Activated CD4-positive, alpha-beta memory T cell treated with anti-CD3 and anti-CD28 coated beads, Interleukin-2, amount 10 ng/mL, durations not matched to agents 7 days and 5 days (primary cell): ENCODE measurements at regions of chr17 and their contacts with region 1.

Region 1: DNA sequence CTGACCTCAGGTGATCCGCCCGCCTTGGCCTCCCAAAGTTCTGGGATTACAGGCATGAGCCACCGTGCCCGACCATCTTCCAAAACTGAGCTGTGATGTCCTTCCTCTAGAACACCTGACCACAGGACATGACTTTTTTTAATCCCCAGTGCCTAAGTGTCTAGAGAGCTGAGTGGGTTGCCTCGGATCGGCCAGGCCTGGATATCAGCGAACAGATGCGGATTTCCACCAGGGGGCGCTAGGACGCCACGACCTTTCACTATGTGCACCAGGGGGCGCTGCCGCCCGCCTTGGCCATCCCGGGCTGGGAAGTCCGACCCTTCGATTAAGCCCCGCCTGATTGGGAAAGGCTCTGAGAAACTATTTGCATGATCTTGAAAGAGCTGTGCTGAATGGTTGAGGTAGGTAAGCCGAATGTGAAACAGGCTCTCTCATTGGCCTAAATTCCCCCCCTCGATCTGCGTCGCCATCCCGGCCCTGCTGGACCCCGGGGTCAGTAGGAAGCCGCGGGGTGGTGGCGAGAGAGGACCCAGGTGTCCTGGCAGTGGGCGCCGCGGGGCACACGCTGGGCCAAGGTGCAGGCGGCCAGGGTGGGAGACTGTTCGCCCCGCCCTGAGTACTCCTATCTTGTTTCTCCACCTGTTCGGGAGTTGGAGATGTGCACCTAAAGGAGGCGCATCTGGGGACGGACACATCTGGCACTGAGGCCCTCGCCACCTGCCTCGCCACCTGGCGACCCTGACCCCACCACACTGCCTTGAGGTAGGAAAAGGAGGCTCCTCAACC is at the start of gene ACBD4:
- DNase-seq: peak; percentile 98
- H3K4me3 Mint-ChIP-seq: peak within 1 kb of the TSS; percentile 87
- H3K27ac Mint-ChIP-seq: peak within 1 kb of the TSS; percentile 66
- H3K4me1 Mint-ChIP-seq: peaks cover 20% of the 10 kb centered on the region
- H3K27me3 Mint-ChIP-seq: peaks cover 9% of the 10 kb centered on the region
- total RNA-seq, gene ACBD4: 15.0 to 17.8 TPM

Region 2: GRCh38 chr17:45051060-45051719 is 84.2 kb before region 1 on chr17 and contains the start of gene DCAKD:
- CTCF ChIA-PET with region 1: interaction called, 21 read pairs
- POLR2A ChIA-PET with region 1: no interaction called
- DNase-seq: peak; percentile 95
- H3K4me3 Mint-ChIP-seq: peak within 1 kb of the TSS; percentile 96
- H3K27ac Mint-ChIP-seq: peak within 1 kb of the TSS; percentile 98
- H3K4me1 Mint-ChIP-seq: peaks cover 49% of the 10 kb centered on the region
- H3K27me3 Mint-ChIP-seq: no peaks in the 10 kb centered on the region
- total RNA-seq, gene DCAKD: 25.9 to 26.2 TPM

Region 3: GRCh38 chr17:45098869-45099616 is 36.3 kb before region 1 on chr17:
- CTCF ChIA-PET with region 1: interaction called, 10 read pairs
- POLR2A ChIA-PET with region 1: no interaction called
- DNase-seq: peak; percentile 79
- H3K4me3 Mint-ChIP-seq: no peak overlapping the region
- H3K27ac Mint-ChIP-seq: no peak overlapping the region
- H3K4me1 Mint-ChIP-seq: no peaks in the 10 kb centered on the region
- H3K27me3 Mint-ChIP-seq: no peaks in the 10 kb centered on the region

Region 4: DNA sequence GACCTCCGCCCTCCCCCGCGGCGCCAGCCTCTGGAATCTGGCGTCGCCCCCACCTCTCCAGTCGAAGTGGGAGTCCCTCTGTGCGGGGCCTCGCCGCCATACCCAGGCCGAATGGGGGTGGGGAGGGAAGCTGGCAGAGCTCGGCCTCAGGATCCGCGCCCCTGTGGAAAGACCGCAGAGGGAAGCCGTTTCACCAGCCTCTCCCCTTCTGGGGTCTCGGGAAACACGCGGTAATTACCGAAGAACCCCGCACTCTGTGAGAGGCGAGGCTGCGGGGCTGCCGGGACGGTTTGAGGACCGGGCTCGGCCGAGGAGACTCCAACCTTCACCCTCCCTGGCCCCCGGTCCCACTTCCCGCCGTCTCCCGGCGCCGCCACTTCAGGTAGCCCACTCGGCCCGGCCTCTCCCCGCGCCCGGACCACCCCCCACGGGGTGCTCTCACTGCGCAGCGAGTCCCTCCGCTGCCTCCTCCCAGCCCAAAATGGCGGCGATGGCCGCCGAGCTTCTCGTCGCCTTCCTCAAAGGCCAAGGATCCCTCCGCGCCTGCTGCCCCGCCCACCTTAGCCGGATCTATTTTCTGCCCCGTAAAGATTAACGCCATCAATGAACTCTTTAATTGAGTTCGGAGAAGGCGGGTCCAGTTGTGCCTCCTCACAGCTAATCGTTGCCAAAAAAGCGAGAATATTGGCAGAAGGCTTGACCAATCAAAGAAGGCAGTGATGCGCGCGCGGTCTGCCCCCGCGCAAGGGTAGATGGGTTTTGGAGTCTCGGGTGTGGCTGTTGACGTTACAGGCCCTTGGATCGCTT is 25.8 kb after region 1 on chr17:
- CTCF ChIA-PET with region 1: interaction called, 67 read pairs
- POLR2A ChIA-PET with region 1: interaction called, 17 read pairs
- DNase-seq: peak; percentile 98
- H3K4me3 Mint-ChIP-seq: peak overlapping the region; percentile 98
- H3K27ac Mint-ChIP-seq: peak overlapping the region; percentile 90
- H3K4me1 Mint-ChIP-seq: peaks cover 46% of the 10 kb centered on the region
- H3K27me3 Mint-ChIP-seq: no peaks in the 10 kb centered on the region

Region 5: GRCh38 chr17:45197555-45198334 is 62.4 kb after region 1 on chr17:
- CTCF ChIA-PET with region 1: interaction called, 221 read pairs
- POLR2A ChIA-PET with region 1: interaction called, 11 read pairs
- DNase-seq: peak; percentile 86
- H3K4me3 Mint-ChIP-seq: no peak overlapping the region
- H3K27ac Mint-ChIP-seq: no peak overlapping the region
- H3K4me1 Mint-ChIP-seq: peaks cover 7% of the 10 kb centered on the region
- H3K27me3 Mint-ChIP-seq: no peaks in the 10 kb centered on the region

Region 6: DNA sequence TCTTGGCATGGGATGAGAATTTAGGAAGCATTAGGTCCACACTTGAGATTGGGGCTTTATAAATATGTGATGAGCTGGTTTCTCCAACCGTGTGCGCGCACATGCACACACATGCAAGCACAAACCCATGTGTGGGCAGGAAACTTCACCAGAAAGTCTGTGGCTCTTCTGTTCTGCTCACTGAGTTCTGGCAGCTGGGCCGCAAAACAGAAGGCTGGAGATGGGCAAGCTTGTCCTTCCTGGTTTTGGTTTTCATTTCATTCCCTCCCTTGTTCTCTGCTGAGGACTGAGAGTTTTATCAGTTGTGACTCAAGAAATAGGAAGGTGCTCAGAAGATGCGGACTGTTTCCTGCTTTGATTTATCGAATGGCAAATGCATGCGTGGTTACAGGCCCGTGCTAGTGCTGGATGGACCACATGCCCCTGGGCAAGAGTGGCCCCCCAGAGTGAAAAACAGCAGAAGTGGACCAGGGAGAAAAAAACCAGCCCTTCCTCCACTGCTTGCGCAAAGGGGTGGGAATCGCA is 167.3 kb after region 1 on chr17:
- CTCF ChIA-PET with region 1: no interaction called
- POLR2A ChIA-PET with region 1: no interaction called
- DNase-seq: peak; percentile 48
- H3K4me3 Mint-ChIP-seq: no peak overlapping the region
- H3K27ac Mint-ChIP-seq: peak overlapping the region; percentile 85
- H3K4me1 Mint-ChIP-seq: peaks cover 79% of the 10 kb centered on the region
- H3K27me3 Mint-ChIP-seq: no peaks in the 10 kb centered on the region